CD8-positive, alpha-beta T cell (primary cell): ENCODE measurements at regions of chr16 and their contacts with region 1.

Region 1: DNA sequence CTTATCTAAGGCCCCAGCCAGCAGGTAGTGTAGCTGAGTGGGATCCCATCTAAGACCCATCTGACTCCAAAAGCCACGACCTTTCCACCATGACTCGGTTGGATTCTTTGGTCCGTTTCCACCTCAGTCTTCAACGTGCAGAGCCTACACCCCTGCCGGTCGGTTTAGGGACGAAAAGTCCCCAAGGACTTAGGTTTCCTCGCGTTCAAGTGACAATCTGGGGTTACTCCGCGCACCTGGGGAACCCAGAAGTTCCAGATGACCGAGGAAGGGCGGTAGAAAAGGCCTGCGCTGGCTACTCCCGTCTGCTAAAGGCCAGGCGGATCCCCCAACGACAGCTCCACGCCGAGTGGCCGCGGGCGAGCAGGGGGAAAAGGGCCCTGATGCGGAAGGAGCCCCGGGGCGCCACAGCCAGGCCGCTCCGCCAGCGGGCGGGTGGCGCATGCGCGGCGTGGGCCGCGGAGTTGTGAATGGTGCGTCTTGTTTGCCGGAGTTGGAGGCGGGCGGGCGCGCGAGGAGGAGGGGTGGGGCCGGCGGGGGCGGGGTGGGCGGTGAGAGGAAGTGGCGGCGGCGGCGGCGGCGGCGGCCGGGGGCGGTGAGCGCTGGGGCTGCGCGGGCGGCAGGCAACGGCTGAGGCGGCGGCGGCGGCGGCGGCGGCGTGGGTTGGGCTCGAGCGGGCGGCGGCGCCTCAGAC is at the start of gene CBFB:
- DNase-seq: peak; percentile 88 to 98 (median 93)
- ATAC-seq: peak; percentile 83
- H3K4me3 ChIP-seq: peak within 1 kb of the TSS; percentile 74 to 98
- H3K4me3 Mint-ChIP-seq: peak within 1 kb of the TSS; percentile 90
- H3K27ac ChIP-seq: peak within 1 kb of the TSS; percentile 97
- H3K27ac Mint-ChIP-seq: peak within 1 kb of the TSS; percentile 96
- H3K4me1 ChIP-seq: peaks cover 41% of the 10 kb centered on the region
- H3K4me1 Mint-ChIP-seq: peaks cover 42% of the 10 kb centered on the region
- H3K27me3 ChIP-seq: no peaks in the 10 kb centered on the region
- H3K27me3 Mint-ChIP-seq: no peaks in the 10 kb centered on the region
- CTCF ChIP-seq: no peak
- total RNA-seq, gene CBFB: 52.3 to 58.6 TPM

Region 2: DNA sequence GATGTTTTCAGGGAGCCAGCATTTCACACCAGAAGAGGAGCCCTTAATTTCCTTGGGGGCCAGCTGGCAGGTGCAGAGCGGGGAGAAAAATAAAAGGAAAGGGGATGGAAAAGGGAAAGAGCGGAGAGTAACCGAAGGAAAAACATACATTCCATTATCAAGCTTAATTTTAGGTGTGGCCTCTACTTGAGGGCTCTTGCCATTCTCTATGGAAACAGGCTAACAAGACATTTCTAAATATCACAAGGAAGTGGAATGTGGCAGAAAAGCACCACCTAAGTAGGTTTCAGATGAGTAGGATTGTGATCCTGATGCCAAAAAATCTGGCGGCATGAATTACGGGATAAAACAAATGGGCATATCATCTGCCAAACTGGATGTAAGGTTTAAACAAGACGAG is 276.3 kb before region 1 on chr16:
- CTCF ChIA-PET with region 1: no interaction called
- POLR2A ChIA-PET with region 1: no interaction called
- intact Hi-C with region 1: no loop called
- DNase-seq: no peak
- ATAC-seq: no peak
- H3K4me3 ChIP-seq: peak overlapping the region in 1 of 2 experiments; percentile 90
- H3K4me3 Mint-ChIP-seq: peak overlapping the region; percentile 87
- H3K27ac ChIP-seq: no peak overlapping the region
- H3K27ac Mint-ChIP-seq: peak overlapping the region; percentile 94
- H3K4me1 ChIP-seq: peaks cover 32% of the 10 kb centered on the region
- H3K4me1 Mint-ChIP-seq: peaks cover 34% of the 10 kb centered on the region
- H3K27me3 ChIP-seq: no peaks in the 10 kb centered on the region
- H3K27me3 Mint-ChIP-seq: peaks cover 13% of the 10 kb centered on the region
- CTCF ChIP-seq: no peak

Region 3: DNA sequence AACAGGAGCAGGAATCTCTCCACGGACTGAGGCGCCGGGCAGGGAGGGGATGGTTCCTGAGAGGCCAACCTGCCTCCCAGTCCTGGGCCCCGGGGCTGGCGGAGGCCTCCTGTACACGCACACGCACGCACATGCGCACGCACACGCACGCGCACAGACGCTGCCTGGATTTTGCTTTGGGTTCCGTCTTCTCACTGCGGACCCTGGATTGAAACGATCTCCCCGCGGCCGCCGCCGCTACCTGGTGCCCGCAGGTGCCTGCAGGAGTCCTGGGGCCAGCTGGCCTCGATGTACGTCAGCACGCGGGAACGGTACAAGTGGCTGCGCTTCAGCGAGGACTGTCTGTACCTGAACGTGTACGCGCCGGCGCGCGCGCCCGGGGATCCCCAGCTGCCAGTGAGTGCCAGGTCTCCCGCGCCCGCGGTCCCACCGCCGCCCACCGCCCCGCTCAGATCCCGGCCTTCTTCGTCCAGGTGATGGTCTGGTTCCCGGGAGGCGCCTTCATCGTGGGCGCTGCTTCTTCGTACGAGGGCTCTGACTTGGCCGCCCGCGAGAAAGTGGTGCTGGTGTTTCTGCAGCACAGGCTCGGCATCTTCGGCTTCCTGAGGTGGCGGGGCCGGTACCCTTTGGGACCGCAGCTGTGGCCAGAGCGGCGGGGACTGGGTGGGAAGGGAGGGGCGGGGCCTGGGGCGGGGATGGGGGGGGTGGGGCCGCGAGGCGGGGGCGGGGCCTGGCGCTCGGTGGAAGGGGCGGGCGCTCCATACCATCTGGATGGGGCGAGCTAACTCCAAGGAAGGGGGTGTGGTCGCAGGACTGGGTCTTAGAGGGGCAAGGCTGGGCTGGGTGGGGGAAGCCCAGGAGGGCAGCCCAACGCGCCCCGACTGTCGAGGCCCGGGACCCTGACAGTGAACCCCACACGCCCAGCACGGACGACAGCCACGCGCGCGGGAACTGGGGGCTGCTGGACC is 28.0 kb before region 1 on chr16:
- CTCF ChIA-PET with region 1: no interaction called
- POLR2A ChIA-PET with region 1: interaction called, 4 read pairs
- intact Hi-C with region 1: loop called in 1 of 2 experiments (anchors 2 kb)
- DNase-seq: peak; percentile 18 to 75 (median 50)
- ATAC-seq: peak; percentile 71
- H3K4me3 ChIP-seq: peak overlapping the region; percentile 48 to 55
- H3K4me3 Mint-ChIP-seq: peak overlapping the region; percentile 80
- H3K27ac ChIP-seq: peak overlapping the region in 1 of 2 experiments; percentile 12
- H3K27ac Mint-ChIP-seq: peak overlapping the region; percentile 76
- H3K4me1 ChIP-seq: peaks cover 11% of the 10 kb centered on the region
- H3K4me1 Mint-ChIP-seq: peaks cover 14% of the 10 kb centered on the region
- H3K27me3 ChIP-seq: no peaks in the 10 kb centered on the region
- H3K27me3 Mint-ChIP-seq: no peaks in the 10 kb centered on the region
- CTCF ChIP-seq: no peak

Region 4: GRCh38 chr16:67017810-67018488 is 10.8 kb before region 1 on chr16:
- CTCF ChIA-PET with region 1: interaction called, 19 read pairs
- POLR2A ChIA-PET with region 1: interaction called, 21 read pairs
- intact Hi-C with region 1: no loop called
- DNase-seq: peak; percentile 67 to 89 (median 85)
- ATAC-seq: peak; percentile 89
- H3K4me3 ChIP-seq: no peak overlapping the region
- H3K4me3 Mint-ChIP-seq: no peak overlapping the region
- H3K27ac ChIP-seq: no peak overlapping the region
- H3K27ac Mint-ChIP-seq: no peak overlapping the region
- H3K4me1 ChIP-seq: peaks cover 15% of the 10 kb centered on the region
- H3K4me1 Mint-ChIP-seq: no peaks in the 10 kb centered on the region
- H3K27me3 ChIP-seq: peaks cover 0 to 18% of the 10 kb centered on the region in 2 experiments
- H3K27me3 Mint-ChIP-seq: no peaks in the 10 kb centered on the region
- CTCF ChIP-seq: peak; percentile 63

Region 5: GRCh38 chr16:67055712-67056487 is 27.2 kb after region 1 on chr16:
- CTCF ChIA-PET with region 1: interaction called, 3 read pairs
- POLR2A ChIA-PET with region 1: interaction called, 11 read pairs
- intact Hi-C with region 1: loop called in 1 of 2 experiments (anchors 2 kb)
- DNase-seq: no peak
- ATAC-seq: no peak
- H3K4me3 ChIP-seq: no peak overlapping the region
- H3K4me3 Mint-ChIP-seq: no peak overlapping the region
- H3K27ac ChIP-seq: no peak overlapping the region
- H3K27ac Mint-ChIP-seq: peak overlapping the region; percentile 30
- H3K4me1 ChIP-seq: peaks cover 24% of the 10 kb centered on the region
- H3K4me1 Mint-ChIP-seq: peaks cover 45% of the 10 kb centered on the region
- H3K27me3 ChIP-seq: no peaks in the 10 kb centered on the region
- H3K27me3 Mint-ChIP-seq: no peaks in the 10 kb centered on the region
- CTCF ChIP-seq: no peak

Region 6: DNA sequence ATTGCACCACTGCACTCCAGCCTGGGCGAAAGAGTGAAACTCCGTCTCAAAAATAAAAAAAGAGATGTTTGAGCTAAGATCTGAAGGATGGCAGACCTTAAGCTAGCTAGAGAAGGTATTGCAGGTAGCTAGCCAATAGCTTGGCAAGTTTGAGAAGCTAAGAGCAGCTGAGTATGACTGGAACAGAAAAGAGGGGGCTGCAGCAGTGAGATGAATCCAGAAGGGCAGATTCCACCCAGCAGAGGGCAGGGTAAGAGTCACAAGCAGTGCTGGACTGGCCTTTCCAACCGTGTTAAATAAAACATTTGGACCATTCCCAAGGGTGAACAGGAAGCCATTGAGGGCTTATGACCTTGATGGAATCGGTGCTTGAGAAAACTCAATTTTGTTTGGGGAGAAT is 75.4 kb after region 1 on chr16:
- CTCF ChIA-PET with region 1: no interaction called
- POLR2A ChIA-PET with region 1: interaction called, 3 read pairs
- intact Hi-C with region 1: loop called in 1 of 2 experiments (anchors 1 kb)
- DNase-seq: peak in 2 of 9 experiments; percentile 9 to 10
- ATAC-seq: no peak
- H3K4me3 ChIP-seq: no peak overlapping the region
- H3K4me3 Mint-ChIP-seq: no peak overlapping the region
- H3K27ac ChIP-seq: no peak overlapping the region
- H3K27ac Mint-ChIP-seq: no peak overlapping the region
- H3K4me1 ChIP-seq: peaks cover 3% of the 10 kb centered on the region
- H3K4me1 Mint-ChIP-seq: no peaks in the 10 kb centered on the region
- H3K27me3 ChIP-seq: no peaks in the 10 kb centered on the region
- H3K27me3 Mint-ChIP-seq: no peaks in the 10 kb centered on the region
- CTCF ChIP-seq: no peak

Region 7: DNA sequence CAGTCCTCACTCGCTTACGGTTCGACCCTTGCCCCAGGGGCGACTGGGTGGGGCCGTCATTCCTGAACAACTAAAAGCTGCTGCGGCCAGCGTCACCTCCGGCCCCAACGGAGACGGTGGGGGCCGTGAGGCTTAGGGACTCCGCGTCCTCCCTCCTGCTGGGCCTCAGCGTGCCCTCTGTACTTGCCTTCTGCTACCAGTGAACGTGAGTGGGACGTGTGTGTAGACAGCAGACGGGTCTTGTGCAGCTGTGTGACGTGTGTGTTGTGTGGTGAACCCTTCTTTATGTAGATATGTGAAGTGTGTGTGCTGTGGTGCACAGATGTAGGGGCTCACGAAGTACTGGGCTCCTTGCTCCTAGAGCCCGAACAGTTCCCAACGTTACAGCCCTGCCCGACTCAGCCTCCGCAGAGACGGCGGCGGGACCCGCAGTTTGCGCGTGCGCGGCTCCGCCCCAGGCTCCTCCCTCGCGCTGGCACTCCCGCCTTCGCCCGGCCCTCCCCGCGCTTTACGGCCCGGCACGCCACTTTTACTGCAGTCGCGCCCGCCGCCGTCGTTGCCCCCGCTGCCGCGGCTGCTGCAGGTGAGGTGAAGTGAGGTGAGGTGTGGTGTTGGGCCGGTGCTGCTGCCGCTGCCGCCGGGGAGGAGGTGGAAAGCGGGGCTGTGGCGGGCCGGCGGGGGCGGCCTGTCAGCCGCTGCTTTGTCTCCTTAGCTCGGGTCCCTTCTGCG is 80.9 kb after region 1 on chr16 and contains the start of gene PHAF1:
- CTCF ChIA-PET with region 1: no interaction called
- POLR2A ChIA-PET with region 1: interaction called, 3 read pairs
- intact Hi-C with region 1: loop called in 1 of 2 experiments (anchors 1 kb)
- DNase-seq: peak; percentile 91 to 99 (median 96)
- ATAC-seq: peak; percentile 93
- H3K4me3 ChIP-seq: peak within 1 kb of the TSS; percentile 83 to 92
- H3K4me3 Mint-ChIP-seq: peak within 1 kb of the TSS; percentile 95
- H3K27ac ChIP-seq: peak within 1 kb of the TSS; percentile 26 to 51
- H3K27ac Mint-ChIP-seq: peak within 1 kb of the TSS; percentile 89
- H3K4me1 ChIP-seq: peaks cover 19% of the 10 kb centered on the region
- H3K4me1 Mint-ChIP-seq: peaks cover 32% of the 10 kb centered on the region
- H3K27me3 ChIP-seq: no peaks in the 10 kb centered on the region
- H3K27me3 Mint-ChIP-seq: no peaks in the 10 kb centered on the region
- CTCF ChIP-seq: no peak
- total RNA-seq, gene PHAF1: 9.6 to 9.7 TPM

Region 8: DNA sequence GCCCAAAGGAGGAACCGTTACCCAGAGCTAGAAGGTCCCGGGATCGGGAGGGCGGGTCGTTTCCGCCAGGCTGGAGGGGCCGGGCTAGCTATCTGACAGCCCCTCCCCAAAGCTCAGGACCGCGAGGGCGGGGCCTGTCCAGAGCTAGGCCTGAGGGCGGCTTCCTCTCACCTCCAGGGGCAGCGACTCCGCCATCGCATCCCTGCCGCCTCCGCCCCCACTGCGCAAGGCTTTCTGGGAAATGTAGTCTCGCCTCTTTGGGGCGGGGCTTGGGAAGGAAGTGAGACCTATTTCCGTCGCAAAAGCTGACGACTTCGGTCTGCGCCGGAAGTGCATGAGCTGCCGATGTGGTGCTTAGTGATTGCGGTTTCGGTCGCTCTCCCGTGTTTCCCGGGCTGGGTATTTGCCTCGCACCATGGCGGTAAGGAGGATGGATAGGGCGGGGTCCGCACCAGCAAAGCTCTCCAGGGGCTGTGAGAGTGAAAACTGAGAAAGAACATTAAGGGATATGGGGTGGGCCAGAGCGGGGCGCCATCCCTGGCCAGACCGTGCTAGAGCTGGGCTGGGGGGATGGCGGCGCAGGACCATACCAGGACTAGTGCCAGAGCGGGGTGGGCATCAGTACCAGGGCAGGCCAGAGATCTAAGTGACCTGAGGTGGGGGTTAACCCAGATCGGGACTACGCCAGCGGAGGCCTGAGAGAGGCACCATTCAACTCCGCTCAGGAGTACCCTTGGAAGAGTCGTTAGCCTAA is 198.3 kb after region 1 on chr16 and contains the start of gene TMEM208:
- CTCF ChIA-PET with region 1: no interaction called
- POLR2A ChIA-PET with region 1: no interaction called
- intact Hi-C with region 1: loop called in 1 of 2 experiments (anchors 1 kb)
- DNase-seq: peak; percentile 95 to 99 (median 98)
- ATAC-seq: peak; percentile 98
- H3K4me3 ChIP-seq: peak within 1 kb of the TSS; percentile 95 to 100
- H3K4me3 Mint-ChIP-seq: peak within 1 kb of the TSS; percentile 100
- H3K27ac ChIP-seq: peak within 1 kb of the TSS; percentile 83 to 93
- H3K27ac Mint-ChIP-seq: peak within 1 kb of the TSS; percentile 98
- H3K4me1 ChIP-seq: peaks cover 26% of the 10 kb centered on the region
- H3K4me1 Mint-ChIP-seq: peaks cover 47% of the 10 kb centered on the region
- H3K27me3 ChIP-seq: no peaks in the 10 kb centered on the region
- H3K27me3 Mint-ChIP-seq: no peaks in the 10 kb centered on the region
- CTCF ChIP-seq: no peak
- total RNA-seq, gene TMEM208: 37.1 to 44.7 TPM

Region 9: GRCh38 chr16:67311607-67312488 is 283.1 kb after region 1 on chr16:
- CTCF ChIA-PET with region 1: no interaction called
- POLR2A ChIA-PET with region 1: no interaction called
- intact Hi-C with region 1: no loop called
- DNase-seq: peak in 3 of 9 experiments; percentile 21 to 48 (median 38)
- ATAC-seq: peak; percentile 72
- H3K4me3 ChIP-seq: no peak overlapping the region
- H3K4me3 Mint-ChIP-seq: no peak overlapping the region
- H3K27ac ChIP-seq: no peak overlapping the region
- H3K27ac Mint-ChIP-seq: no peak overlapping the region
- H3K4me1 ChIP-seq: no peaks in the 10 kb centered on the region
- H3K4me1 Mint-ChIP-seq: no peaks in the 10 kb centered on the region
- H3K27me3 ChIP-seq: peaks cover 0 to 5% of the 10 kb centered on the region in 2 experiments
- H3K27me3 Mint-ChIP-seq: no peaks in the 10 kb centered on the region
- CTCF ChIP-seq: no peak

Region 10: GRCh38 chr16:67441271-67441753 is 412.6 kb after region 1 on chr16:
- CTCF ChIA-PET with region 1: no interaction called
- POLR2A ChIA-PET with region 1: no interaction called
- intact Hi-C with region 1: no loop called
- DNase-seq: no peak
- ATAC-seq: no peak
- H3K4me3 ChIP-seq: no peak overlapping the region
- H3K4me3 Mint-ChIP-seq: no peak overlapping the region
- H3K27ac ChIP-seq: no peak overlapping the region
- H3K27ac Mint-ChIP-seq: peak overlapping the region; percentile 27
- H3K4me1 ChIP-seq: no peaks in the 10 kb centered on the region
- H3K4me1 Mint-ChIP-seq: no peaks in the 10 kb centered on the region
- H3K27me3 ChIP-seq: no peaks in the 10 kb centered on the region
- H3K27me3 Mint-ChIP-seq: no peaks in the 10 kb centered on the region
- CTCF ChIP-seq: no peak